Mammary epithelial cell (primary cell): ENCODE measurements at regions of chr4 and their contacts with region 1.

Region 1: DNA sequence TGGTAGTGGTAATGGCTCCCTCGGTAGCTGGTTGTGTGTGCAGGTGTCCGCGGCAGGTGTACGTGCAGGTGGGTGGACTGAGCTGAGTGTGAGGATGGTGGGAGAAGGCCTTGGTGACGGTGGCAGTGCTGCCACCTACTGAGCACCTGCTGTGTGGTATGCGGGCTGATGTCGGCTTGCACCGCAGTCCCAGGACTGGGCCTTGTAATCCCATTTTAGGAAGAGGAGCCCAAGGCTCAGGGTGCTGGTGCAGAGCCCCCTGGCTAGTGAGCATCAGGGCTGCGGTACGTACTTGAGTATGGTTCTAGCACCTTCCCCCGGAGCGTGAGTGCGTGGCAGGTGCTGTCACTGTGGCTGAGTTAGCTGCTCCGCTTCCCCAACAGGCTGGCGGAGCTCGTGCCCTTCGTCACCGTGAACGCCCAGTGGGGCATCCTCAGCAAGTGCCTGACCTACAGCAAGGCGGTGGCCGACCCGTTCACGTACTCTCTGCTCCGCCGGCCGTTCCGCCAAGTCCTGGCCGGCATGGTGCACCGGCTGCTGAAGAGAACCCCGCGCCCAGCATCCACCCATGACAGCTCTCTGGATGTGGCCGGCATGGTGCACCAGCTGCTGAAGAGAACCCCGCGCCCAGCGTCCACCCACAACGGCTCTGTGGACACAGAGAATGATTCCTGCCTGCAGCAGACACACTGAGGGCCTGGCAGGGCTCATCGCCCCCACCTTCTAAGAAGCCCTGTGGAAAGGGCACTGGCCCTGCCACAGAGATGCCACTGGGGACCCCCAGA is 5.7 kb upstream of the CPZ start:
- DNase-seq: no peak
- H3K4me3 ChIP-seq: no peak overlapping the region
- H3K27ac ChIP-seq: no peak overlapping the region
- H3K4me1 ChIP-seq: no peaks in the 10 kb centered on the region
- H3K27me3 ChIP-seq: peaks cover 2% of the 10 kb centered on the region
- CTCF ChIP-seq: peak; percentile 27 to 45

Region 2: DNA sequence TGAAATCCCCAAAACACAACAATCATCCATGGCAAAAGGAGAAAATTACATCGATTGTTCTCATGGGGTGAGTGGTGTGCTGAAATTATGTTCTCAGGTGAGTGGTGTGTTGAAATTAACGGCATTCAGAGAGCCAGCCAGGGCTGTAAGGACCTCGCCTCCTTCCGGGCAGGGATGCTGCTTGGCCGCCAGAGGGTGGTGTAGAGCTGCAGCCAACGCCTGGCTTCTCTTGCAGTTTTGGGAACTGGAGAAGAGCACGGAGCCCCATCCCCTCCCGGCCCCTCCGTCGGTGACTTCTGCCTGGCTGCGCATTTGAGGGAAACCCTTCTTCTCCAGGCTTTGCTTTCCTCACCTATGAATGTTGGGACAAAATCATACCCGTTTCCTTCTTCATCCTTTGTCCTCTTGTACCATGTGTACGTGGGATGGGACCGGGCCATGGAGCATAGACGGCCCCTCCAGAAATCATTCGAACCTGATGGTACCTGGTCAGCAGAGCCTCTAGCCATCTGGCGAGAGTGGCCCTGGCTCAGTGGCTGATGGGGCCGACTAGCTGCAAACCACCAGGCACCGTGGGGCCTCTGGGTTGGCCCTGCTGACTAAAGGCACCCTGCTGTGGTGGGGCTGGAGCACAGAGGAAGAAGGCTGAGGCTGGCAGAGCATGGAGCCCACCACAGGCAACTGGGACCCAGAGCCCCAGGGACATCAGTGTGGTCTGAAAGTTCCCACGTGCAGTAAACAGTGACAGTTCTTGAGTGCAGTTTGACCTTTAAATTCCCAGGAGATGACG is 117.9 kb before region 1 on chr4:
- CTCF ChIA-PET with region 1: no interaction called
- dilution Hi-C with region 1: no loop called
- in situ Hi-C with region 1: loop called (anchors 5 to 10 kb)
- intact Hi-C with region 1: loop called (anchors 1 kb)
- DNase-seq: peak; percentile 39
- H3K4me3 ChIP-seq: no peak overlapping the region
- H3K27ac ChIP-seq: no peak overlapping the region
- H3K4me1 ChIP-seq: no peaks in the 10 kb centered on the region
- H3K27me3 ChIP-seq: no peaks in the 10 kb centered on the region
- CTCF ChIP-seq: peak; percentile 95 to 98

Region 3: GRCh38 chr4:8665406-8666360 is 78.8 kb after region 1 on chr4:
- CTCF ChIA-PET with region 1: no interaction called
- dilution Hi-C with region 1: no loop called
- in situ Hi-C with region 1: no loop called
- intact Hi-C with region 1: no loop called
- DNase-seq: no peak
- H3K4me3 ChIP-seq: no peak overlapping the region
- H3K27ac ChIP-seq: no peak overlapping the region
- H3K4me1 ChIP-seq: no peaks in the 10 kb centered on the region
- H3K27me3 ChIP-seq: no peaks in the 10 kb centered on the region
- CTCF ChIP-seq: no peak